ENCODE measurements at regions of chr5 and their contacts with region 1.

Region 1: GRCh38 chr5:149442563-149443182 is 63.6 kb upstream of the IL17B start:
- DNase-seq: peak; percentile 80 to 94 (median 87)
- H3K4me3 ChIP-seq: no peak overlapping the region
- H3K27ac ChIP-seq: peak overlapping the region in 2 of 5 donors; percentile 67 to 69
- H3K4me1 ChIP-seq: peaks cover 8 to 29% of the 10 kb centered on the region in 2 donors
- H3K27me3 ChIP-seq: no peaks in the 10 kb centered on the region
- CTCF ChIP-seq: peak; percentile 82 to 98 (median 95)
- POLR2A ChIP-seq: no peak

Region 2: GRCh38 chr5:149561848-149562247 is 119.2 kb after region 1 on chr5:
- intact Hi-C with region 1: loop called (anchors 5 kb)
- DNase-seq: peak in 2 of 7 donors; percentile 41 to 48
- H3K4me3 ChIP-seq: peak overlapping the region in 1 of 4 donors; percentile 20
- H3K27ac ChIP-seq: peak overlapping the region; percentile 59 to 85 (median 73)
- H3K4me1 ChIP-seq: peaks cover 14 to 31% of the 10 kb centered on the region in 2 donors
- H3K27me3 ChIP-seq: no peaks in the 10 kb centered on the region
- CTCF ChIP-seq: no peak
- POLR2A ChIP-seq: peak in 1 of 2 donors; percentile 37

Region 3: DNA sequence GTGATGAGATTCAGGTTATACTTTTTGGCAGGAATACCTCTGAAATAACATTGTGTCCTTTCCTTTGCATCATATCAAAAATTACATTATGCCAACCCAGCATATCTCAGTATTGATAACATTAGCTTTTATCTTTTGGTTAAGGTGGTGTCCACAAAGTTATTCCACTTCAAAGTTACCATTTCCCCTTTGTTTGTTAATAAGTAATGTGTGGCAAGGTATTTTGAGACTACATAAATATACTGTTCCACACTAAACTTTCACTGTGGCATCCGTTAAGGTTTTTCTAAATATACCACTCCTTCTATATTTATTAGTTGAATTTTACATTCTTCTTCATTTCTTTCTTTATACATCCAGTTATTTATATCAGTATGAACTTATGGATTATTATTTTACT is 124.6 kb after region 1 on chr5:
- intact Hi-C with region 1: loop called in 1 of 2 experiments (anchors 5 kb)
- DNase-seq: no peak
- H3K4me3 ChIP-seq: no peak overlapping the region
- H3K27ac ChIP-seq: no peak overlapping the region
- H3K4me1 ChIP-seq: peaks cover 6 to 19% of the 10 kb centered on the region in 2 donors
- H3K27me3 ChIP-seq: no peaks in the 10 kb centered on the region
- CTCF ChIP-seq: no peak
- POLR2A ChIP-seq: no peak

Region 4: DNA sequence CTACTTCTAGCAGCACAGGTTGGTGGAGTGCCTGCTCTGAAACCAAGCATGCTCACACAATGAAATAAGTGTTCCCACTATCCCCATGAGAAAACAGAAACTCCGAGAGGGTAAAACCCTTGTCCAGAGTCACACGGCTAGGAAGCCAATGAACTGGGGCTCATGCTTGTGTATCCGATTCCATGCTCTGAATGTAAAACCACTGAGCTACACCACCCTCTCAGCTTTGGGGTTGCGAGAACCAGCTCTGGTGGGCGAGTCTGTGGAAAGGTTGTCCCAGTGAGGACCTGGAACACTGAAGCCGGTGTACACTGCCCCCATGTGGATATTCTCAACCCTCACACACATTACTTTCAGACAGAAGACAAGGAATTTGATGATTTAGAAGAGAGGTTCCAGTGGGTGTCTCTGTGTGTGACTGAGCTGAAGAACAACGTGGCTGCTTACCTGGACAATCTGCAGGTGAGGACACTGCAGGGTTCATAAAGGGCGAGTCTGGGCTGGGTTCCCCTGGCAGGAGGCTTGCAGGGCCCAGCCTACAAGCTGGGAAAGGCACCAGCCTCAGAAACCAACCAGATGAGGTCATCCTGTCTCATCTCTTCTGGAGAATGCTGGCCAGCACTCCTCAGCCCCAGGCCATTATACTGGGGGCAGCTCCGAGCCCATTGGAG is 176.0 kb after region 1 on chr5:
- intact Hi-C with region 1: loop called in 1 of 2 experiments (anchors 5 kb)
- DNase-seq: peak; percentile 32 to 73 (median 50)
- H3K4me3 ChIP-seq: no peak overlapping the region
- H3K27ac ChIP-seq: no peak overlapping the region
- H3K4me1 ChIP-seq: no peaks in the 10 kb centered on the region
- H3K27me3 ChIP-seq: no peaks in the 10 kb centered on the region
- CTCF ChIP-seq: peak; percentile 51 to 68 (median 62)
- POLR2A ChIP-seq: no peak